A673 (cell line): ENCODE measurements at regions of chr13 and their contacts with region 1.

Region 1: GRCh38 chr13:21486322-21486721 is 27.2 kb upstream of the ZDHHC20 start:
- DNase-seq: no peak
- H3K4me3 ChIP-seq: no peak overlapping the region
- H3K27ac ChIP-seq: no peak overlapping the region
- H3K4me1 ChIP-seq: no peaks in the 10 kb centered on the region
- H3K27me3 ChIP-seq: no peaks in the 10 kb centered on the region
- CTCF ChIP-seq: no peak

Region 2: DNA sequence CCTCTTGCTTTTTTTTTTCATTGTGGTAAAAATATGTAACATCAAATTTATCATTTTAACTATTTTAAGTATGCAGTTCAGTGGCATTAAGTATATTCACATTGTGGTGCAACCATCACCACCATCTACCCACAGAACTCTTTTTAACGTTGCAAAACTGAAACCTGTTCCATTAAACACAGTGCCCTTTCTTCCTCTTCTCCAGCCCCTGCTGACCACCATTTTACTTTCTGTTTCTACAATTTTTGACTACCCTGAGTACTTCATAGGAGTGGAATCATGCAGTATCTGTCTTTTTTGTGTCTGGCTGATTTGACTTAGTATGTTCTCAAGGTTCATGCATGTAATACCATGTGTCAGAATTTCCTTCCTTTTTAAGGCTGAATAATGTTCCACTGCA is 337.6 kb after region 1 on chr13:
- CTCF ChIA-PET with region 1: no interaction called
- POLR2A ChIA-PET with region 1: no interaction called
- intact Hi-C with region 1: no loop called
- DNase-seq: no peak
- H3K4me3 ChIP-seq: no peak overlapping the region
- H3K27ac ChIP-seq: no peak overlapping the region
- H3K4me1 ChIP-seq: no peaks in the 10 kb centered on the region
- H3K27me3 ChIP-seq: peaks cover 4% of the 10 kb centered on the region
- CTCF ChIP-seq: no peak

Region 3: GRCh38 chr13:22903301-22903700 is 1417.0 kb after region 1 on chr13:
- CTCF ChIA-PET with region 1: interaction called, 11 read pairs
- POLR2A ChIA-PET with region 1: no interaction called
- intact Hi-C with region 1: no loop called
- DNase-seq: no peak
- H3K4me3 ChIP-seq: no peak overlapping the region
- H3K27ac ChIP-seq: no peak overlapping the region
- H3K4me1 ChIP-seq: no peaks in the 10 kb centered on the region
- H3K27me3 ChIP-seq: no peaks in the 10 kb centered on the region
- CTCF ChIP-seq: no peak